GM13976 (cell line): ENCODE measurements at regions of chr4 and their contacts with region 1.

Region 1: DNA sequence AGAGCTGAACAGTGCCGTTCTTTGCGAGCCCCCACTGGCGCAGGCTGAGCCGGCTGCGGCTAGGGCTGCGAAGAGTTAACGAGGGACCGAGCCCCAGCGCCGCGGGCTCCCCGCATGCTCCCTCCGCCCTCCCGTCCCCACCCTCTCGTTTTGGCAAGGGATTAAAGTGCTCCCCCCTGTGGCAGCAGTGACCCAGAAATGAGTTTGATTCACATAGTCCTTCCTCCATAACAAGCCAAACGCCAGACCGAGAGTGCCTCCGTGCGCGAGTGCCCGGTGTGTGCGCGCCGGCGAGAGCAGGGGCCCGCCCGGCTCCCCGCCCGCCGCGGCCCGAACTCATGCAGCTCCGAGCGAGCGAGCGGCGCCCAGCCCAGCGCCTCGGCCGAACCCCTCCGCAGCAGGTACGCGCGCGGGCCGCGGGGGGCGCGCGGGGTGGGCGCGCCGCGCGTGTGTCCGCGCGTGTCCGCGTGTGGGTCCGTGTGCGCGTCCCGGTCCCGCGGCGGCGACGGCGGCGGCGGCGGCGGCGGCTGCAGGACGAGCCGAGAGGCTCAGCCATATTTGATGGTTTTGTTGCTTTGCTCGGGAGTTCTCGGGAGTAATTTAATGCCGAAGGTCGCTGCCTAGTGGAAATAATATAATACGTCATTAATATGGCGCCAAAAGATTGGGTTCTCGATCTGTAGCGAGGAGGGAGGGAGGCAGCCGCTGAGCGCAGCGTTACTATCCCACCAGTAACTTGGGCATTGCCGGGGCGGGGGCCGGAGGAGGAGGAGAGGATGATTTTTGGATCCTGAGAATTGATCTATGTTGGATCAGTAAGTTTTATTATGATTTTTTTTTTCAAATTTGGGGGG is at the start of gene JADE1:
- DNase-seq: peak; percentile 91
- CTCF ChIP-seq: peak; percentile 72

Region 2: GRCh38 chr4:128574706-128575105 is 235.0 kb before region 1 on chr4:
- in situ Hi-C with region 1: loop called (anchors 5 kb)
- DNase-seq: peak; percentile 74
- CTCF ChIP-seq: peak; percentile 59

Region 3: DNA sequence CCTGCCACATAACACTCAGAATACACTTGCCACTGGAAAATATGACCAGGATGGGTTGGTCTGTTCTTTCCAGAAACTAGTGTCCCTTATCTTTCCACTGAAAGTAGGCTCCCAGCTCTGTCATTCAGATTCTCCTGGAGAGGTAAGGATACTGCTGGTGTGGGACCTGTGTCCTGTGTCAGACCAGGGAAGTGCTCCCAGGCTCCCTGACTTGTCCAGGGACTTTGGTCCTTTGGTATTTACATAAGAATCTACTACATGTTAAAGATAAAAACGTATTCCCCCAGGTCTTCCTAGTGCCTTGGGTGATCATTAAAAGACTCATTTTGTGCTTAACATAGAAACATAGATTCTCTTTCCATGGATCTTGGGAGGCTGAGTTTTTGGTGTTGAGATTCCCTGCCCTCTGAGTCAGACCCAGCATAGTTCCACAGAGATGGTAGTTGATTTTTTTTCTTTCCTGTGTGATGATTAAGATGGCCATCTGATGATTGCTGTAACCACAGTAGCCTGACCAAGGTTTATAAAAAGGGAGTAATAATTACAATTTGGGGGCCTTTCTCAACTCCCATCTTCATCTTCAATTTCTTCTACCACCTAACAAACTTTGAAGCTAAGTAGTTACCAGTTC is 160.0 kb before region 1 on chr4:
- in situ Hi-C with region 1: no loop called
- DNase-seq: no peak
- CTCF ChIP-seq: no peak

Region 4: GRCh38 chr4:128688846-128689467 is 120.7 kb before region 1 on chr4:
- in situ Hi-C with region 1: no loop called
- DNase-seq: no peak
- CTCF ChIP-seq: no peak

Region 5: DNA sequence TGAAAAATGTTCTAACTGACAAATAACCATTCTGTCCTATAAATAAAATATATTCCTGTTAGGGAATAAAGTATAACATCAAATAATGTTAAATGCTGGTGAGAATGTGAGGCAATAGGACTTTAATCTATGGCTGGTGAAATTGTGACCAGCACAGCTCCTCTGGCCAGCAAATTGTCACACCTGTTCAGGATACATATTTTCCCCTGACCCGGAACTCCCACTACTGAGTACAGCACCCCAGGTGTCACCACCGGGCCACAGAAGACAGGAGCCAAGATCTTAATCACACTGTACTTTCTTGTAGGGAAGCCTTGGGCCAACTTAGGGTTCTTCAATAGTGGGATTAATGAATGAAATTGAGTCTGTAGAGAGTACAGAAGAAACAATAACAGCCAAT is 319.4 kb after region 1 on chr4:
- in situ Hi-C with region 1: no loop called
- DNase-seq: no peak
- CTCF ChIP-seq: no peak